Posterior vena cava (tissue), 2 donors: ENCODE measurements at regions of chr21 and their contacts with region 1.

Region 1: GRCh38 chr21:17679002-17679600 is 66.4 kb upstream of the BTG3 start:
- DNase-seq: no peak

Region 2: GRCh38 chr21:17631195-17631594 is 47.9 kb before region 1 on chr21:
- intact Hi-C with region 1: no loop called
- DNase-seq: no peak

Region 3: DNA sequence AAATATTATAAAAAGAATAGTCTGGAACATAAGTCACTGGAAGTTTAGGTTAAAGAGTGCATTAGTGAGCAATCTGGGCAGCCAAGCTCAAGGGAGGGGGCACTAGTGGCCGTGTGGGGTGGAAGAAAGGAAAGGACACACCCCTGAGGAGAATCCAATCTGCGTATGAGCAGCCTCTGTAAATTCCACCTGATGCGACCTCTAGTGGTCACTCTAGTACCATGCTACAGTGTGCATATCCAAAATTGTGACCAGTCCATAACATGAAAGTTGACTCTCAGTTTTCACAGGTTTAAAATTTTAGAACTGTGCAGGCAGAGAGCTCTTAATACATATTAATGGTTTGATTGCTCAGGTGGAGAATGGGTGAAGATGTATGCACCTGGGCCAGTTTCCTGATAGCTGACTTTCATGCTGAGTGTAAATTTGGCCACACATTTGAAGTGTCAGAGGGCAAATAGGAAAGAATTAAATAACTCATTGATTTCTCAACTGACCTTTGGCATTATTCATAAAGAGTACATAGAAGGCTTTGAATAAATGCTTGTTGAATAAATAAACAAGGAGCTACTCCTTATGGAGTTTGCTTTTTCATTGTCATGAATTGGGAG is 246.0 kb after region 1 on chr21:
- intact Hi-C with region 1: loop called (anchors 5 kb)
- DNase-seq: no peak

Region 4: GRCh38 chr21:18987520-18988026 is 1308.5 kb after region 1 on chr21:
- intact Hi-C with region 1: no loop called
- DNase-seq: no peak